Naive thymus-derived CD4-positive, alpha-beta T cell (primary cell): ENCODE measurements at regions of chr2 and their contacts with region 1.

Region 1: DNA sequence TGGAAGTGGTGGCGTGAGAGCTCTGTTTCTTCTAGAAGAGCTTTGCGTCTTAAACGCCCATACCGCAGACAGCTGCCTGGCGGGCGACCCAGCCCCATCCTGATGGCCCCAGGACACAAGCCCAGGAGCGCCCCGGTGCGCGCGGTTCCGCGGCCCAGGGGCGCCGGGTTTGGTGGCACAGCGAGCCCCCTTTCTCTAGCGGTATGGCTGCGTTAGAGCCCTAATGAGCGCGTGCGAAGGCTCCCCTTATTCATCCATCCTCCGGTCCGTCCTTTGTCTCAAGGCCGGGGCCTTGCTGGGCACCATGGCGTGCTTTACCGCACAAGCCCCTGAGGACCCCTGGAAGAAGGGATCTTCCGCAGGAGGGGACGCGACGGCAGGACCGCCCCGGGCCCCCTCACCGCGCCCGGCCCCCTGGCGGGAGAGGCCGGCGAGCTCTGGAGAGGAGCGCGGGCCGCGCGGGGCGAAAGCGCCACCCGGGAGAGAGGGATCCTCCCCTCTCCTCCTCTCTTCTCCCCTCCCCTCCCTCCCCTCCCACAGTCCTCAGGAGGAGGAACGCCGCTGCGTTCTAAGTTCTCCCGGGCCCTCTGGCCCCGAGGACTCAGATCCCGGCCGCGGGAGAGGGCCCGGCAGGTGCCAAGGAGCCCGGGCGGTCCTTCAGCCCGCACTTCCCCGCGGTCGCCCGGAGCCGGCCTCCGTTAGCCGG is 626 bp upstream of the SLC1A4 start:
- DNase-seq: peak; percentile 17 to 70 (median 39)
- ATAC-seq: peak; percentile 47
- H3K4me3 ChIP-seq: peak overlapping the region; percentile 76
- H3K4me3 Mint-ChIP-seq: peak overlapping the region; percentile 80 to 92 (median 86)
- H3K27ac ChIP-seq: no peak overlapping the region
- H3K27ac Mint-ChIP-seq: peak overlapping the region in 4 of 9 donors; percentile 40 to 73 (median 44)
- H3K4me1 ChIP-seq: peaks cover 0 to 8% of the 10 kb centered on the region in 2 donors
- H3K4me1 Mint-ChIP-seq: peaks cover 16 to 62% (median 24%) of the 10 kb centered on the region in 7 donors
- H3K27me3 ChIP-seq: no peaks in the 10 kb centered on the region
- H3K27me3 Mint-ChIP-seq: peaks cover 0 to 33% (median 4%) of the 10 kb centered on the region in 5 donors

Region 2: GRCh38 chr2:64036034-64036705 is 952.4 kb before region 1 on chr2:
- CTCF ChIA-PET with region 1: no interaction called
- POLR2A ChIA-PET with region 1: no interaction called
- intact Hi-C with region 1: loop called in 1 of 2 experiments (anchors 5 kb)
- DNase-seq: peak in 7 of 9 donors; percentile 60 to 75 (median 64)
- ATAC-seq: peak; percentile 98
- H3K4me3 ChIP-seq: peak overlapping the region; percentile 25
- H3K4me3 Mint-ChIP-seq: peak overlapping the region; percentile 30 to 86 (median 60)
- H3K27ac ChIP-seq: peak overlapping the region; percentile 54
- H3K27ac Mint-ChIP-seq: peak overlapping the region; percentile 49 to 93 (median 83)
- H3K4me1 ChIP-seq: peaks cover 20 to 42% of the 10 kb centered on the region in 2 donors
- H3K4me1 Mint-ChIP-seq: peaks cover 29 to 70% (median 54%) of the 10 kb centered on the region in 7 donors
- H3K27me3 ChIP-seq: no peaks in the 10 kb centered on the region
- H3K27me3 Mint-ChIP-seq: no peaks in the 10 kb centered on the region

Region 3: GRCh38 chr2:64945973-64946768 is 42.4 kb before region 1 on chr2:
- CTCF ChIA-PET with region 1: no interaction called
- POLR2A ChIA-PET with region 1: no interaction called
- intact Hi-C with region 1: loop called (anchors 1 to 2 kb)
- DNase-seq: peak; percentile 19 to 74 (median 47)
- ATAC-seq: peak; percentile 93
- H3K4me3 ChIP-seq: peak overlapping the region; percentile 19
- H3K4me3 Mint-ChIP-seq: peak overlapping the region; percentile 65 to 84 (median 80)
- H3K27ac ChIP-seq: peak overlapping the region; percentile 50
- H3K27ac Mint-ChIP-seq: peak overlapping the region; percentile 49 to 94 (median 89)
- H3K4me1 ChIP-seq: peaks cover 21 to 25% of the 10 kb centered on the region in 2 donors
- H3K4me1 Mint-ChIP-seq: peaks cover 29 to 60% (median 42%) of the 10 kb centered on the region in 7 donors
- H3K27me3 ChIP-seq: no peaks in the 10 kb centered on the region
- H3K27me3 Mint-ChIP-seq: no peaks in the 10 kb centered on the region

Region 4: DNA sequence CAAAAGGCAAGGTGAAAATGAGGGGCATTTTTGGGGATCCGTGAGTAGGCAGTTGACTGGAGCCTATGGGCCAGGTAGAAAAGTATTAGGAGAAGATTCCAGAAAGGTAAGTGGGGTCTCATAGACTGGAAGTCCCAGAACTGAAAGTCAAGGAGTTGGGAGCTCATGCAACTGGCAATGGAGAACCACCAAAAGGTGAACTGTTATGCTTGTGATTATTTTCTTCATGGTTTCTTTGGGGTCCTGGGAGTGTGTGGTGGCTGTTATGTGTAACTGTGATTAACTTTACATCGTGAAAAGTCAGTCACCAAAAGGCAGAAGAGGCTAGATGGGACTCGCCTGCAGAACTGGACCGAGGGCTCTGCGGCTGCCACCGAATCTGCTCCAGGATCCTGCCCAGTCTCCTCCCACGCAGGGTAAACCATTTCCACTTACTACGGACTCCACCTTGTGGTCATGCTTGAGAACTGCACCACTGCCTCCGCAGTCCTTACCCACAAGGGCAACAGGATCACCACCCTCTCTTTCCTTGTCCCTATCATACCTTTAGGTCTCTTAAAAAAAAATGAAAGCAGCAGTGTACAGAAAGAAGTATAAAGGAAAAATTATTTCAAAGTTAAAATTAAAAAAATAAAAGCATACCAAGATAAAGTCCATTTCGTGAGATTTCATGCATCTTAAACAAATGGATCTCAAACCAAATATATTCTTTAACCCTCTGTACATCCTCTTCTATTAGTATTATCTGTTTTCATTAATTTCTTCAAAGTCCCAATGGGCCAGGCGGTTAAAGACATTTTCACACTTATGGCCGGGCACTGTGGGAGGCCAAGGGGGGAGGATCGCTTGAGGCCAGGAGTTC is 52.1 kb after region 1 on chr2:
- CTCF ChIA-PET with region 1: no interaction called
- POLR2A ChIA-PET with region 1: no interaction called
- intact Hi-C with region 1: loop called (anchors 1 to 2 kb)
- DNase-seq: peak; percentile 43 to 77 (median 68)
- ATAC-seq: peak; percentile 100
- H3K4me3 ChIP-seq: no peak overlapping the region
- H3K4me3 Mint-ChIP-seq: peak overlapping the region in 6 of 10 donors; percentile 23 to 65 (median 44)
- H3K27ac ChIP-seq: no peak overlapping the region
- H3K27ac Mint-ChIP-seq: peak overlapping the region in 1 of 9 donors; percentile 34
- H3K4me1 ChIP-seq: peaks cover 0 to 3% of the 10 kb centered on the region in 2 donors
- H3K4me1 Mint-ChIP-seq: peaks cover 0 to 24% (median 12%) of the 10 kb centered on the region in 7 donors
- H3K27me3 ChIP-seq: no peaks in the 10 kb centered on the region
- H3K27me3 Mint-ChIP-seq: peaks cover 0 to 2% (median 0%) of the 10 kb centered on the region in 5 donors

Region 5: GRCh38 chr2:65129826-65130663 is 141.5 kb after region 1 on chr2 and contains the start of gene RAB1A:
- CTCF ChIA-PET with region 1: no interaction called
- POLR2A ChIA-PET with region 1: interaction called, 7 read pairs
- intact Hi-C with region 1: loop called (anchors 1 kb)
- DNase-seq: peak; percentile 91 to 99 (median 98)
- ATAC-seq: peak; percentile 94
- H3K4me3 ChIP-seq: peak within 1 kb of the TSS; percentile 78
- H3K4me3 Mint-ChIP-seq: peak within 1 kb of the TSS; percentile 90 to 100 (median 98)
- H3K27ac ChIP-seq: peak within 1 kb of the TSS; percentile 98
- H3K27ac Mint-ChIP-seq: peak within 1 kb of the TSS; percentile 95 to 100 (median 99)
- H3K4me1 ChIP-seq: peaks cover 24 to 25% of the 10 kb centered on the region in 2 donors
- H3K4me1 Mint-ChIP-seq: peaks cover 24 to 47% (median 35%) of the 10 kb centered on the region in 7 donors
- H3K27me3 ChIP-seq: no peaks in the 10 kb centered on the region
- H3K27me3 Mint-ChIP-seq: peaks cover 0 to 17% (median 0%) of the 10 kb centered on the region in 5 donors
- total RNA-seq, gene RAB1A: 48.8 to 78.6 (median 65.8) TPM

Region 6: DNA sequence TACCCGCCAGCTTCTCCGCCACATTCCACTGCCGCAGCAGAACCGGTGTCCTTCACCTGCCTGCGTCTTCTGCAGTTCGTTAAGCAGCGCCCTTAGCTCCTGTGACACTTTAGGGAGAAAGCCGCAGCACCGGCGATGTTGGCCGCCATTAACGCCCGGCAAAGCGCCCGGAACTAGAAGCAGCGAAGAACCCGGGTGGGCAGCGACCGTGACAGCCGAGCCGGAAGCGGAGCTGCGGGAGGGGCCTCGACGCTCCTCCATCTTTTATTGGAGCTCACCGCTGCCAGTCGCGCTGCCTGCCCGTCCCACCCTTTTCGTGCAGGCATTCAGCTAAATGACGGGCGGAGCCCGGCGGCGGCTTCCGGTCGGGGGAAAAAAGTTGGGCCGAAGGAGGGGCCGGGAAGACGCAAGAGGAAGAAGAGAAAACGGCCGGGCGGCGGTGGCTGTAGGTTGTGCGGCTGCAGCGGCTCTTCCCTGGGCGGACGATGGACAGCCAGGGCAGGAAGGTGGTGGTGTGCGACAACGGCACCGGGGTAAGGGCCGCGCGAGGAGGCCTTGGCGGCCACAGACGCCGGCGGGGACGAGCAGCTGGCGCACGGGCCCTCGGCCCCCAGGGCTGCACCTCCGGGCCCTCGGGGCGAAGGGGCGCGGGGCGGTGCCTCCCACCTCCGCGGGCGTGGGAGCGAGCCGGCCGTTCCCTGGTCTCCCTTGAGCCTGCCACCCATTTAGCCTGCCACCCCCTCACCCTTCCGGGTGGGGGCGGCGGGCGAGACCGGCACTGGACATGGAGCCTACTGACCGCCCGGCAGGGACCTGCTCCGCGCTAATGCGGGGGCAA is 239.1 kb after region 1 on chr2 and contains the start of gene ACTR2:
- CTCF ChIA-PET with region 1: no interaction called
- POLR2A ChIA-PET with region 1: no interaction called
- intact Hi-C with region 1: loop called in 1 of 2 experiments (anchors 2 kb)
- DNase-seq: peak; percentile 86 to 94 (median 93)
- ATAC-seq: peak; percentile 97
- H3K4me3 ChIP-seq: peak within 1 kb of the TSS; percentile 99
- H3K4me3 Mint-ChIP-seq: peak within 1 kb of the TSS; percentile 95 to 100 (median 98)
- H3K27ac ChIP-seq: peak within 1 kb of the TSS; percentile 97
- H3K27ac Mint-ChIP-seq: peak within 1 kb of the TSS; percentile 97 to 99 (median 98)
- H3K4me1 ChIP-seq: peaks cover 25 to 38% of the 10 kb centered on the region in 2 donors
- H3K4me1 Mint-ChIP-seq: peaks cover 24 to 54% (median 44%) of the 10 kb centered on the region in 7 donors
- H3K27me3 ChIP-seq: no peaks in the 10 kb centered on the region
- H3K27me3 Mint-ChIP-seq: no peaks in the 10 kb centered on the region
- total RNA-seq, gene ACTR2: 180 to 435 (median 287) TPM

Region 7: DNA sequence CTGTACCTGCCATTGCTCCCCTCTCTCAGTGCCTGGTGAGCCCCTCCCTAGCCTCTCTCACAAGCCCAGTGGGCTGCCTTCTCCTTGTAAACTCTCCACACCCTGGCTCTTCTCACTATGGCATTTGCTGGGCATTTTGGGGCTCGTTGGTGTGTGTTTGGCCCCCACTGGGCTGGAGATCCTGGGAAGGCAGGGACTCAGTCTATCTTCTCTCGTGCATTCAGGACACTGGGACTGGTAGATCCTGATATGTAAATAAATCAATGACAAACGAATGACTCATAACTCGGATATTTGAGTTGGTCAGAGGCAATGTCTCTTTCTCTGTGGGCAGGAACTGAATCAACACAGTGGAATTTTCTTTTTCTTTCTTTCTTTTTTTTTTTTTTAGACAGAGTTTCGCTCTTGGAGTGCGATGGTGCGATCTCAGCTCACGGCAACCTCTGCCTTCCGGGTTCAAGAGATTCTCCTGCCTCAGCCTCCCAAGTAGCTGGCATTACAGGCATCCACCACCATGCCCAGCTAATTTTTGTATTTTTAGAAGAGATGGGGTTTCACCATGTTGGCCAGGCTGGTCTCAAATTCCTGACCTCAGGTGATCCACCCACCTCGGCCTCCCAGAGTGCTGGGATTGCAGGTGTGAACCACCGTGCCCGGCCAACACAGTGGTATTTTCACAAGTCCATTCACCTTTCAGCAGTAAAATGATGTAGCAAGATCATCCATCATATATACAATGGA is 588.5 kb after region 1 on chr2:
- CTCF ChIA-PET with region 1: no interaction called
- POLR2A ChIA-PET with region 1: no interaction called
- intact Hi-C with region 1: loop called in 1 of 2 experiments (anchors 5 kb)
- DNase-seq: no peak
- ATAC-seq: no peak
- H3K4me3 ChIP-seq: no peak overlapping the region
- H3K4me3 Mint-ChIP-seq: no peak overlapping the region
- H3K27ac ChIP-seq: no peak overlapping the region
- H3K27ac Mint-ChIP-seq: peak overlapping the region in 1 of 9 donors; percentile 9
- H3K4me1 ChIP-seq: no peaks in the 10 kb centered on the region
- H3K4me1 Mint-ChIP-seq: peaks cover 0 to 5% (median 4%) of the 10 kb centered on the region in 7 donors
- H3K27me3 ChIP-seq: no peaks in the 10 kb centered on the region
- H3K27me3 Mint-ChIP-seq: peaks cover 5 to 16% (median 11%) of the 10 kb centered on the region in 5 donors